ENCODE measurements at regions of chr3 and their contacts with region 1.

Region 1: GRCh38 chr3:168040607-168041208 is 55.0 kb downstream of the GOLIM4 start:
- DNase-seq: no peak
- ATAC-seq: peak; percentile 48 to 86 (median 84)
- H3K4me3 ChIP-seq: no peak overlapping the region
- H3K27ac ChIP-seq: no peak overlapping the region
- H3K4me1 ChIP-seq: peaks cover 7% of the 10 kb centered on the region
- H3K27me3 ChIP-seq: no peaks in the 10 kb centered on the region
- CTCF ChIP-seq: peak; percentile 60

Region 2: DNA sequence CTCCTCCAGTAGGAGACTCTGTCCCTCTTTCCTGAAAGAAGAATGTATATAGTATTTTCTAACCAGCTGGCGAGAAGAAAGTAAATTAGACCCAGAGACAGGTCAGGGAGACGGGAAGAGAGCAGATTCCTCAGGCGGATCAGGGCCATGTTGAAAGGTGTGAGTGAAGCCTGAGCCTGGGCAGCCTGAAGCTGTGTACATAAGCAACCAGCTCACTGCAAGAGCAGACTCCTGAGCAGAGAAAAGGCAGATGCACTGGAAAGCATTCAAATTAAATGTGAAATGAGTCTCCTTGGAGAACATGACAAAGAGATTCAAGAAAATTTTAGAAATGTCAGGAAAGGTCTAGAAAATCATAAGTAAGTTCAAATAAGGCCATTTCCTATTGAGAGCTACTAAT is 110.7 kb before region 1 on chr3:
- intact Hi-C with region 1: loop called in 1 of 2 experiments (anchors 5 kb)
- DNase-seq: no peak
- ATAC-seq: no peak
- H3K4me3 ChIP-seq: no peak overlapping the region
- H3K27ac ChIP-seq: no peak overlapping the region
- H3K4me1 ChIP-seq: no peaks in the 10 kb centered on the region
- H3K27me3 ChIP-seq: no peaks in the 10 kb centered on the region
- CTCF ChIP-seq: no peak